Activated naive CD4-positive, alpha-beta T cell treated with anti-CD3 and anti-CD28 coated beads for 36 hours (primary cell): ENCODE measurements at regions of chr5 and their contacts with region 1.

Region 1: DNA sequence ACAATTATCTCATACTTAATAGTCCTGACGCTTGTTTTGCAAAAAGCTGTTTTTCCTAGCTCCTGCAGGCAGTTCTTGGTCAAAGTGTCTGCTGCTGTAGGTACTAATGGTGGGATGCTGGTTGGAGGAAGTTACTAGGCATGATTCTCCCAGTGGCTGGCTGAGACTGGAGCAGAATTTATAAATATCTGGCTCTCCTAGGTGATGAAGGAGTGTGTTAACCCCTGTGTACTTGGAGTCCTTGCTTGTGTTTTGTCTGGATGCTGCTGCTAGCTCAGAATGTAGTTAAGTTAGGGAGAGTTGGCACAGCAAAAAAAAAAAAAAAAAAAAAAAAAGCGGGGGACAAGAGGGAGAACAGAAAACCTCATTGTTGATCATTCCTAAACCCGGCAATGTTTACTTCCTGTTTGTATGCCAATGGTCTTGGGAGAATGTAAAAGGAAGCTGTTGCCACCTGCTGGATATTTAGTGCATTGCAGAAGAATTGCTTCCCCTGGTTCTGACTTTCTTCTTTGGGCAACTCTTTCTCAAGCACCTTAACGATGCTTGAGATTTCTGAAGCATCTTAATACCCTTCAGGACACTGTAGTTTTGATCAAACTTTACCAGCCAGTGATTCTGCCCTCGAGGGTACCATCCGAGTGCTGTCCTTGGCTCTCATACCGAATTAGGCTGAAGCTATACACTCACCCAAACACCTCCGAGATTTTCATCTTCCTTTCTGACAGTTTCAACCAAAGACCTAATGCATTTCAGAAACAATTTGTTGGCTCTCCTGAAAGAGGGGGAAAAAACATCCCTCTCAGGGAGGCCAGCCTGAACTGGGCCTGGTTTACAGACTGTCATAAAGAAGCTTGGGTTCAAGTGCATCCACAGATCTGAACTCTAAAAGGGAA is 71.7 kb upstream of the WWC1 start:
- DNase-seq: peak; percentile 61
- H3K4me3 Mint-ChIP-seq: no peak overlapping the region
- H3K27ac Mint-ChIP-seq: no peak overlapping the region
- H3K4me1 Mint-ChIP-seq: peaks cover 3% of the 10 kb centered on the region
- H3K27me3 Mint-ChIP-seq: no peaks in the 10 kb centered on the region

Region 2: GRCh38 chr5:168114444-168115017 is 105.2 kb before region 1 on chr5:
- CTCF ChIA-PET with region 1: interaction called, 27 read pairs
- intact Hi-C with region 1: loop called (anchors 1 kb)
- DNase-seq: peak; percentile 75
- H3K4me3 Mint-ChIP-seq: no peak overlapping the region
- H3K27ac Mint-ChIP-seq: no peak overlapping the region
- H3K4me1 Mint-ChIP-seq: peaks cover 1% of the 10 kb centered on the region
- H3K27me3 Mint-ChIP-seq: peaks cover 4% of the 10 kb centered on the region